ENCODE measurements at regions of chr9 and their contacts with region 1.

Region 1: GRCh38 chr9:36023260-36024048 is 13.3 kb upstream of the RECK start:
- DNase-seq: peak; percentile 77
- H3K4me3 Mint-ChIP-seq: no peak overlapping the region
- H3K27ac Mint-ChIP-seq: no peak overlapping the region
- H3K4me1 Mint-ChIP-seq: no peaks in the 10 kb centered on the region
- H3K27me3 Mint-ChIP-seq: no peaks in the 10 kb centered on the region

Region 2: DNA sequence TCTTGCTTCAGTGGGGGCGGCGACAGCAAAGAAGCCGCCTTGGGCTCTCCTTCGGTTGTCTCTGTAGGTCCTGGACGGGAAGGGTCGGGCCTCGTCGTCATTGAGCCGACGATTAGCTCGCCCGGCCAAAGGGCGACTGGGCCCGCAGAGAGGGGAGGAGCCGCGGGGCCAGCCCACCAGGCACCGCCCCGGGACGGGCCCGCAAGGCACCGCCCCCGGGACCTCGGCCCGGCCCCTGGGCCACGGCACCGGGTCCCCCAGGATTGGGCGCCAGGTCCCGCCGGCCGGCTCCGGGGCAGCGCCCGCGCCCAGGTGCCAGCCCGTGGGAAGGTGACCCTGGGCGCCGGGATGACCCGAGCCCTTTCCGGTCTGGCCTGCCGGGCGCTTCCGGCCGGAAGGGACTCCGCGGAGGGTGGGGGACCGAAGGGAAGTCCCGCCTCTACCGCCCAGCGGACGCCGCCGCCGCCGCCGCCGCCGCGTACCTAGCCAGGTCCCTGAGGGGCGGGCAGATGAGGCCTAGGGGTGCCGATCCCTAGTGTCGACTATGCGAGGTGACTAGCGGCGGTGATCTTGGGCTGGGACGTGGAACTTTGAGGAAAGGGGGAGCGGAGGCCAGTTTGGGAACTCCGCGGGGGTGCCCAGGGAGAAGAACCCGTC is 274.5 kb before region 1 on chr9 and contains the starts of genes GBA2 and RGP1:
- CTCF ChIA-PET with region 1: no interaction called
- POLR2A ChIA-PET with region 1: no interaction called
- intact Hi-C with region 1: no loop called
- DNase-seq: peak; percentile 82
- H3K4me3 Mint-ChIP-seq: peak within 1 kb of the TSS; percentile 93
- H3K27ac Mint-ChIP-seq: peak within 1 kb of the TSS; percentile 88
- H3K4me1 Mint-ChIP-seq: peaks cover 37% of the 10 kb centered on the region
- H3K27me3 Mint-ChIP-seq: no peaks in the 10 kb centered on the region
- total RNA-seq, gene GBA2: 30.4 to 30.7 TPM
- total RNA-seq, gene RGP1: 17.4 to 18.0 TPM

Region 3: GRCh38 chr9:35954942-35955546 is 68.4 kb before region 1 on chr9:
- CTCF ChIA-PET with region 1: interaction called, 128 read pairs
- POLR2A ChIA-PET with region 1: no interaction called
- intact Hi-C with region 1: loop called (anchors 1 kb)
- DNase-seq: peak; percentile 59
- H3K4me3 Mint-ChIP-seq: no peak overlapping the region
- H3K27ac Mint-ChIP-seq: no peak overlapping the region
- H3K4me1 Mint-ChIP-seq: peaks cover 6% of the 10 kb centered on the region
- H3K27me3 Mint-ChIP-seq: peaks cover 2% of the 10 kb centered on the region